ENCODE measurements at regions of chr20 and their contacts with region 1.

Region 1: GRCh38 chr20:44901974-44902373 is 7.9 kb upstream of the PABPC1L start:
- DNase-seq: no peak
- ATAC-seq: no peak
- H3K4me3 ChIP-seq: no peak overlapping the region
- H3K4me3 Mint-ChIP-seq: no peak overlapping the region
- H3K27ac ChIP-seq: no peak overlapping the region
- H3K27ac Mint-ChIP-seq: no peak overlapping the region
- H3K4me1 ChIP-seq: peaks cover 26% of the 10 kb centered on the region
- H3K4me1 Mint-ChIP-seq: peaks cover 42% of the 10 kb centered on the region
- H3K27me3 ChIP-seq: no peaks in the 10 kb centered on the region
- H3K27me3 Mint-ChIP-seq: no peaks in the 10 kb centered on the region
- CTCF ChIP-seq: no peak

Region 2: GRCh38 chr20:44805979-44806620 is 95.9 kb before region 1 on chr20:
- CTCF ChIA-PET with region 1: no interaction called
- POLR2A ChIA-PET with region 1: no interaction called
- intact Hi-C with region 1: no loop called
- DNase-seq: no peak
- ATAC-seq: no peak
- H3K4me3 ChIP-seq: no peak overlapping the region
- H3K4me3 Mint-ChIP-seq: no peak overlapping the region
- H3K27ac ChIP-seq: no peak overlapping the region
- H3K27ac Mint-ChIP-seq: no peak overlapping the region
- H3K4me1 ChIP-seq: no peaks in the 10 kb centered on the region
- H3K4me1 Mint-ChIP-seq: peaks cover 9% of the 10 kb centered on the region
- H3K27me3 ChIP-seq: peaks cover 0 to 21% of the 10 kb centered on the region in 2 experiments
- H3K27me3 Mint-ChIP-seq: peaks cover 58% of the 10 kb centered on the region
- CTCF ChIP-seq: no peak

Region 3: DNA sequence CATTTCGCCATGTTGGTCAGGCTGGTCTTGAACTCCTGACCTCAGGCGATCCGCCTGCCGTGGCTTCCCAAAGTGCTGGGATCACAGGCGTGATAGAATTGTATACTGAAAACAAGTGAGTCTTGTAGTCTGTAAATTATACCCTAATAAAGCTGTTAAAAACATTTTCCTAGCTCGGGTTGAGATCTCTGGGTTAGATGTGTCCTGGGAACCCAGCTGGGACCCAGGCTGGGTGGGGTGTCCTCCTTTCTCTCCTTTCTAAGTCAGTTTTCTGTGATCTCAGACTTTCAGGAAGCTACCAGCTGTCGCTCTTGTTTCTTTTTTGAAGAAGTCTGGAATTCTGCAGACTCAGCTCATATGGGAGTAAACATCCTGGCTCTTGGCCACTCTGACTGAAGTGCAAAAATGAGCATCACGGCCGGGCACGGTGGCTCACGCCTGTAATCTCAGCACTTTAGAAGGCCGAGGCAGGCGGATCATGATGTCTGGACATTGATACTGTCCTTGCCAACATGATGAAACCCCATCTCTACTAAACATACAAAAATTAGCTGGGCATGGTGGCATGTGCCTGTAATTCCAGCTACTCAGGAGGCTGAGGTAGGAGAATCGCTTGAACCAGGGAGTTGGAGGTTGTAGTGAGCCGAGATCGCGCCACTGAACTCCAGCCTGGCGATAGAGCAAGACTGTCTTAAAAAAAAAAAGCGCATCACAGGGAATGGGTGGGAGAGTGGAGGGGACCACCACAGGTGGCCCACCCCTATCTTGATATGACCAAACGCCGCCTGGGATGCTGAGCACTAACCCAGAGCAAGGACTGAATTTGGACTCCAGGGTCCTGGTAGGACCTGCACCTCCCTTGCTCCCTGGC is 1022.7 kb after region 1 on chr20:
- CTCF ChIA-PET with region 1: no interaction called
- POLR2A ChIA-PET with region 1: no interaction called
- intact Hi-C with region 1: loop called in 1 of 2 experiments (anchors 5 kb)
- DNase-seq: no peak
- ATAC-seq: no peak
- H3K4me3 ChIP-seq: no peak overlapping the region
- H3K4me3 Mint-ChIP-seq: no peak overlapping the region
- H3K27ac ChIP-seq: no peak overlapping the region
- H3K27ac Mint-ChIP-seq: no peak overlapping the region
- H3K4me1 ChIP-seq: no peaks in the 10 kb centered on the region
- H3K4me1 Mint-ChIP-seq: peaks cover 3% of the 10 kb centered on the region
- H3K27me3 ChIP-seq: no peaks in the 10 kb centered on the region
- H3K27me3 Mint-ChIP-seq: peaks cover 10% of the 10 kb centered on the region
- CTCF ChIP-seq: no peak